ENCODE measurements at regions of chr2 and their contacts with region 1.

Region 1: DNA sequence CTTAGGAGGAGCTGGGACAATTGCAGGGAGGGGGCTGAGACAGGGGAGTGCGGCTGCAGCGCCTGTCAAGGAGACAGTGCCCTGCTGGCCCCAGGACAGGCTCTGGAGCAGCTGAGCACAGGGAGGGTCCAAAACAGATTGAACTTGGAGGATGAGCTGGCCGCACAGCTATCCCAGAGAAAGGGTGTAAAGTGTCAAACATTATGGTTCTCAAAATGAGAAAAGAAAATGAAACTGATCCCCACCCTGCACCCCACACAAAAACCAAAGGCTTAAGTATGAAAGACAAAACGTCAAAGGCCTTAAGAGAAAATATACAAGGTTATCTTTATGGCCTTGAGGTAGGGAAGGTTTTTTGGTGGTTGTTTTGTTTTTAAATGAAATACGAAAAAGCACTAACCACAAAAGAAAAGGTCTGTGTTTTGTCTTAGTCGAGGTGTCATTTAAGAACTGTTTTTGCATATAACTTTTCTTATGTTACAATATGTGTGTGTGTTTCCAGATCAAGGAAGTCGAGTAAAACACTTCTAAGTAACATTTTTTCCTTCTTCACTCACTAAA is 111.8 kb downstream of the HDAC4 start:
- DNase-seq: peak in 7 of 9 donors; percentile 63 to 87 (median 81)
- ATAC-seq: peak; percentile 82
- H3K4me3 ChIP-seq: peak overlapping the region; percentile 49
- H3K4me3 Mint-ChIP-seq: peak overlapping the region; percentile 70 to 89 (median 79)
- H3K27ac ChIP-seq: peak overlapping the region; percentile 79
- H3K27ac Mint-ChIP-seq: peak overlapping the region; percentile 92 to 99 (median 96)
- H3K4me1 ChIP-seq: peaks cover 40 to 63% of the 10 kb centered on the region in 2 donors
- H3K4me1 Mint-ChIP-seq: peaks cover 60 to 98% (median 82%) of the 10 kb centered on the region in 7 donors
- H3K27me3 ChIP-seq: no peaks in the 10 kb centered on the region
- H3K27me3 Mint-ChIP-seq: peaks cover 0 to 3% (median 0%) of the 10 kb centered on the region in 5 donors

Region 2: DNA sequence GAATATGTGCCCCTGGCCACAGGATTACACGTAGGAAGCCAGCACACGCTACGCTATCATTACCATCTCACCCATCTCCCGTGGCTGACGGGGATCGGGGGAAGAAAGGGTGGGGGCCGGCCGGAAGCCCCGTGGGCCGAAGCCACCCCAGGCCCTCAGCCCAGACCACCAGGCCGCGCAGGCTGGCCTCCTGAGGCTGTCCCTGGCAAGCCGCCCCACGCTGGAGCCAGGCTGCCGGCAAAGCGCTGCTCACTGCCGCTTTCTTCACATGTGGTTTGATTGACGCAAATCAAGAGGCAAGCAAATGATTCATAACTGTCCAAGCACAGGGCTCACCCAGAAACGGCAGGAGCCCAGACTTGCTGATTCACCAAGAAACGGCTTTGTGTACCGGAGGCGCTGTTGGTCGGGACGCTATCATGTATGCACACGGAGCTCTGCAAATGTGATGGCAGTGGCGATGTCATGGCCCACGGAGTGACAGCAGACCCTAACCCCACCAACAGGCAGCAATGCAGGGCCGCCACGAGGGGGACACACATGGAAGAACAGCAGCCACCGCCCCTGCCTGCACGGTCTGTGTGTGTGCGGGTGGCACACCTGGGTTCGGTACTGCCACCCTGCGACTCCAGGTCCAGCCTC is 13.9 kb before region 1 on chr2:
- CTCF ChIA-PET with region 1: interaction called, 100 read pairs
- POLR2A ChIA-PET with region 1: interaction called, 362 read pairs
- intact Hi-C with region 1: loop called (anchors 1 kb)
- DNase-seq: peak; percentile 55 to 88 (median 78)
- ATAC-seq: peak; percentile 94
- H3K4me3 ChIP-seq: peak overlapping the region; percentile 35
- H3K4me3 Mint-ChIP-seq: peak overlapping the region; percentile 72 to 88 (median 80)
- H3K27ac ChIP-seq: peak overlapping the region; percentile 19
- H3K27ac Mint-ChIP-seq: peak overlapping the region; percentile 67 to 97 (median 87)
- H3K4me1 ChIP-seq: peaks cover 17 to 32% of the 10 kb centered on the region in 2 donors
- H3K4me1 Mint-ChIP-seq: peaks cover 53 to 84% (median 78%) of the 10 kb centered on the region in 7 donors
- H3K27me3 ChIP-seq: no peaks in the 10 kb centered on the region
- H3K27me3 Mint-ChIP-seq: peaks cover 0 to 4% (median 0%) of the 10 kb centered on the region in 5 donors

Region 3: DNA sequence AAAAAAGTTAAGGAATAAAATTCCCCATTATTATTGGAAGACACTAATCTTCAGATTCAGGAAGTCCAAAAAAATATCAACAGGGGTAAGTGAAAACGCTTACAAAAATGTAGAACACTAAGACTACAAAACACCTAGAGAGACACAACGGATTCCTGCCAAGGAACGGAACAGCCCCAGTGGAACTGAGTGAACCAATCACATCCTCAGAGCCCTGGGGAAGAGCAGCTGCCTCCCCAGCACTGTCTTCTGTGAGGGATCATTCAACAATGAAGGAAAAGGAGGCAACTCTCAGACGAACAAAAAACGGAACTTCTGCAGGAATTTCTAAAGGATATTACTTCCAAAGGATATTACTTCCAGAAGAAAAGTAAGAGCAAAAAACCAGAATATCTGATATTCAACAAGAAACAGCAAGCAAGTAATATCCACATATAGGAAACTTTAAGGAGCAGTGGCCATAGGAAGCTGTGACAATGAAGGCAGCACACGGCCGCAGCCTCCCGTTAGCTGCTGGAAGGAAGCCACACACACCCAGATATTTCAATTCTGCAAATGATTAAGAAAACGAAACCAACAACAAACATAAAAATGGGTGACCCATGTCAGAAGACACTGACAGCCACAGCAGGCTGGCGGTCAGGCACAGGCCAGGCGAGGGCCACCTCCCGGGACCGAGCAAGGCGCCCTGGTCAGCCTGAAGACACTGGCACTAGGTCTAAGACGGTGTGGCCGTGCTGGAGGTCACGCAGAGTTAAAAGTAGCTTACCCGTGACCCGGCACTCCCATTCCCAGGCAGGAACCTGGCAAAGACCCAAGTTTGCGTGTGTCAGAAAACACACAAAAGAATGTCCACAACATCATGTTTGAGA is 30.0 kb after region 1 on chr2:
- CTCF ChIA-PET with region 1: interaction called, 3 read pairs
- POLR2A ChIA-PET with region 1: interaction called, 80 read pairs
- intact Hi-C with region 1: loop called in 1 of 2 experiments (anchors 5 kb)
- DNase-seq: peak in 4 of 9 donors; percentile 6 to 31 (median 28)
- ATAC-seq: peak; percentile 5
- H3K4me3 ChIP-seq: no peak overlapping the region
- H3K4me3 Mint-ChIP-seq: peak overlapping the region; percentile 78 to 90 (median 88)
- H3K27ac ChIP-seq: peak overlapping the region; percentile 64
- H3K27ac Mint-ChIP-seq: peak overlapping the region; percentile 93 to 100 (median 98)
- H3K4me1 ChIP-seq: peaks cover 31 to 41% of the 10 kb centered on the region in 2 donors
- H3K4me1 Mint-ChIP-seq: peaks cover 34 to 91% (median 78%) of the 10 kb centered on the region in 7 donors
- H3K27me3 ChIP-seq: no peaks in the 10 kb centered on the region
- H3K27me3 Mint-ChIP-seq: no peaks in the 10 kb centered on the region

Region 4: GRCh38 chr2:239326831-239327535 is 38.0 kb after region 1 on chr2:
- CTCF ChIA-PET with region 1: no interaction called
- POLR2A ChIA-PET with region 1: interaction called, 80 read pairs
- intact Hi-C with region 1: loop called (anchors 2 to 5 kb)
- DNase-seq: peak in 8 of 9 donors; percentile 54 to 81 (median 72)
- ATAC-seq: peak; percentile 83
- H3K4me3 ChIP-seq: no peak overlapping the region
- H3K4me3 Mint-ChIP-seq: peak overlapping the region; percentile 55 to 79 (median 71)
- H3K27ac ChIP-seq: peak overlapping the region; percentile 68
- H3K27ac Mint-ChIP-seq: peak overlapping the region; percentile 89 to 100 (median 95)
- H3K4me1 ChIP-seq: peaks cover 20 to 65% of the 10 kb centered on the region in 2 donors
- H3K4me1 Mint-ChIP-seq: peaks cover 54 to 99% (median 89%) of the 10 kb centered on the region in 7 donors
- H3K27me3 ChIP-seq: no peaks in the 10 kb centered on the region
- H3K27me3 Mint-ChIP-seq: no peaks in the 10 kb centered on the region

Region 5: DNA sequence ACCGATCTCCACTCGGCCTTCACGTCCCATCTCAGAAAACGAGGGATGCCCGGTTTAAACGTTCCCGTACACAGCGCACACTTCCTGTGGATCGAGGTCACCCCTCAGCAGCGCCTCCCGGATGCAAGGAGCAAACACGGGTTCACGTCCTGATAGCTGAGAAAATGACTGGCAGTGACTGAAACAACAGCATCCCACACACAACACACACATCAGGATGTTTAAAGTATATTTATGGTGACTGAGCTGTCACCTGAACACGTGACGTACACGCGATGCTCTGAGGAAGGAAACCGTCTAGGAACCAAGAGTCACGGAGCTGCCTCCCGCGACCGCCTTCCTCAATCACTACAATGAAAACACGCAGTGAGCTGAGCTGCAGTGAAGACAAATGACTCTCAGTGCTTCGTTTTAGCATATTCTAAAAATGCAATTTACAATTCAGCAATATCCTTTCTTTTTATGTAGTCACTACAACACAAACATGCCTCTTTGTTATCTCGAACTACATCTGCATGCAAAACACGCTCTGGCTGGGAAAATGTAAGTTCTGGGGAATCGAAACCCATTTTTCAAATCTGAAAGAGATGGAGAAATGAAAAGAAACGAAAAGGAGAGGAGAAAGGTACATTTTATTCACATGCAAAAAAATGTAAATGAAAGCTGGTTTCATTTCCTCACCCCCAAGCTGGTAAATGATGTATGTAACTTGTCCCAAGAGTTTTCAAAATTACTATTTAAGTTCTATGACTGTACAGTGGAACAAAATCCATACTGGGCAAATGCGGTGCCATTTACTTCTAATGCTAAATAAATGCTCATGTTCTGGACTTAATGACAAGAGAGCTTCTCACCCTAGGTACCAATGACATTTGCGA is 92.0 kb after region 1 on chr2:
- CTCF ChIA-PET with region 1: no interaction called
- POLR2A ChIA-PET with region 1: interaction called, 5 read pairs
- intact Hi-C with region 1: loop called in 1 of 2 experiments (anchors 1 kb)
- DNase-seq: peak; percentile 34 to 87 (median 81)
- ATAC-seq: peak; percentile 91
- H3K4me3 ChIP-seq: peak overlapping the region; percentile 20
- H3K4me3 Mint-ChIP-seq: peak overlapping the region; percentile 69 to 93 (median 88)
- H3K27ac ChIP-seq: peak overlapping the region; percentile 67
- H3K27ac Mint-ChIP-seq: peak overlapping the region; percentile 90 to 99 (median 96)
- H3K4me1 ChIP-seq: peaks cover 0 to 15% of the 10 kb centered on the region in 2 donors
- H3K4me1 Mint-ChIP-seq: peaks cover 21 to 47% (median 35%) of the 10 kb centered on the region in 7 donors
- H3K27me3 ChIP-seq: no peaks in the 10 kb centered on the region
- H3K27me3 Mint-ChIP-seq: no peaks in the 10 kb centered on the region

Region 6: GRCh38 chr2:239660390-239661230 is 371.6 kb after region 1 on chr2:
- CTCF ChIA-PET with region 1: no interaction called
- POLR2A ChIA-PET with region 1: no interaction called
- intact Hi-C with region 1: no loop called
- DNase-seq: no peak
- ATAC-seq: no peak
- H3K4me3 ChIP-seq: no peak overlapping the region
- H3K4me3 Mint-ChIP-seq: no peak overlapping the region
- H3K27ac ChIP-seq: no peak overlapping the region
- H3K27ac Mint-ChIP-seq: no peak overlapping the region
- H3K4me1 ChIP-seq: no peaks in the 10 kb centered on the region
- H3K4me1 Mint-ChIP-seq: peaks cover 0 to 10% (median 0%) of the 10 kb centered on the region in 7 donors
- H3K27me3 ChIP-seq: no peaks in the 10 kb centered on the region
- H3K27me3 Mint-ChIP-seq: peaks cover 20 to 37% (median 29%) of the 10 kb centered on the region in 5 donors